Activated T-helper 1 cell treated with anti-CD3 and anti-CD28 coated beads, Interleukin-12 subunit alpha, Interleukin-12 subunit beta, Interleukin-2, Interleukin-4 antibody, amounts not matched to agents 30 ng/mL and 10 ng/mL and 1 ng/mL, durations not matched to agents 14 hours and 24 hours and 36 hours (primary cell): ENCODE measurements at regions of chr9 and their contacts with region 1.

Region 1: DNA sequence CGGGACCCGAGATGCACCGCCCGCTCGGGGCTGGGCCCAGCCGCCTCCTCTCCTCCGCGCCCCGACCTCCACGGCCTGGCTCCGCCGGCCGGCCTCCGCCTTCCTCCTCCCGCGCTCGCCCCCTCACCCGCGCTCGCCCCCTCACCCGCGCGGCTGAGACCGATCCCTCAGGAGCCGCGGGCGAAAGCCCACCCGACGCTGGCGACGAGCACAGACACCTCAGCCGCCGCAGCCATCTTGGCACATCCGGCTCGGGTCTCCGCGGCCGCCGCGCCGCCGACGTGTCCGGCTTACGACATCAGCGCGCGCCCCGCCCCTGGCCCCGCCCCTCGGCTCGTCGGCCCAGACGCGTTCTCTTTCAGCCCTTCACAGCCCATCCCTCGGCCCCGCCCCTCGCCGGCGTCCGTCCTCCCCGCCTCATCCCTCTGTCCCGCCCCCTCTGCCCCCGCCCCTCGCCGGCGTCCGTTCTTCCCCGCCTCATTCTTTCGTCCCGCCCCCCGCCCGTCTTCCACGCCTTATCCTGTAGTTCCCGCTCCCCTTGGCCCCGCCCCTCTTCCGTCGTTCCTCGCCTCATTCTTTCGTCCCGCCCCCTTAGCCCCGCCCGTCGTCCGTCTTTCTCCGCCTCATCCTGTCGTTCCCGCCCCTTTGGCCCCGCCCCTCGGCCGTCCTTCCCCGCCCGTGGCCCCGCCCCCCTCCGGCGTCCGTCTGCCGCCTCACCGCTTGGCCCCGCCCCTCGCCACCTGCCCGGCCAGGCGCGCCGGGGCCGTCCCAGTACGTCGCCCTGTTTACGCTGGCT is at the start of gene SEC16A:
- DNase-seq: peak; percentile 98
- H3K4me3 Mint-ChIP-seq: peak within 1 kb of the TSS; percentile 96
- H3K27ac Mint-ChIP-seq: peak within 1 kb of the TSS; percentile 95
- H3K4me1 Mint-ChIP-seq: peaks cover 23% of the 10 kb centered on the region
- H3K27me3 Mint-ChIP-seq: no peaks in the 10 kb centered on the region
- total RNA-seq, gene SEC16A: 87.3 and 88.5 TPM in 2 replicates

Region 2: DNA sequence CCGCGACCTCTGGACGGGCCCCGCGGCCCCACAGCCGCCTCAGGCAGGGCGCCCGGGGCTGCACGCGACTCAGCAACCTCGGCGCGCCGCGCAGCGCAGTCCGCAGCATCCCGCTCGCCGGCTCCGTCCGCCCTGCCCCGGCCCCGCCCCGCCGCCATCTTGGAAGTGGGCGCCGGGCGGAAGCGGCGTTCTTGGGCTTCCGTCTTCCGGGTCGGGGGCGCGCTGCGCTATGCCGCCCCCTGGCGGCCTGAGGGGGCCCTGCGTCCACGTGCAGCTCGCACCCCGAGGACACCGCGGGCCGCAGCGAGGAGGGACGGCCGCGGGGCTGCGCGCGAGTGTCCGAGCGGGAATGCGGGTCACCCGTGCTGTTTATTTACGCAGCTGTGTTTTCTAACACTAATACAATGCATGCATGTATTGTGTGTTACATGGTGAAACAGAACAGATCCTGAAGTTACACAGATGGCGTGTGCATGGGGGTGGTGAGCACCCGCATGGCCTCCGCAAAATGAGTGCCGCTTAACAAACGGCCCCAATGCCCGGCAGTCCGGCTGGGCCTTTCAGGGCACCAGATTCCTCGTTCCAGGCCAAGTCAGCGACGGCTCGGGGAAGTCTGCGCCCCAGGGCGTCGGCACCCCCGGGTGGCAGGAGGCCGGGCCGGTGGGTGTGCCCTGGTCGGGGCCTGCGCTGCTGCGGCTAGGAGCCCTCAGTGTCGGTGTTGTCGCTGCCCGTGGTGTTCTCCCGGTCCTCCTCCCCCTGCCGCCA is 119.2 kb before region 1 on chr9 and contains the start of gene DNLZ:
- intact Hi-C with region 1: loop called (anchors 1 kb)
- DNase-seq: peak; percentile 83
- H3K4me3 Mint-ChIP-seq: peak within 1 kb of the TSS; percentile 83
- H3K27ac Mint-ChIP-seq: peak within 1 kb of the TSS; percentile 79
- H3K4me1 Mint-ChIP-seq: peaks cover 6% of the 10 kb centered on the region
- H3K27me3 Mint-ChIP-seq: no peaks in the 10 kb centered on the region
- total RNA-seq, gene DNLZ: 35.2 TPM in 2 replicates

Region 3: GRCh38 chr9:136439550-136440408 is 43.2 kb before region 1 on chr9 and contains the start of gene INPP5E:
- intact Hi-C with region 1: loop called (anchors 2 kb)
- DNase-seq: peak; percentile 84
- H3K4me3 Mint-ChIP-seq: peak within 1 kb of the TSS; percentile 88
- H3K27ac Mint-ChIP-seq: peak within 1 kb of the TSS; percentile 23
- H3K4me1 Mint-ChIP-seq: peaks cover 18% of the 10 kb centered on the region
- H3K27me3 Mint-ChIP-seq: no peaks in the 10 kb centered on the region
- total RNA-seq, gene INPP5E: 19.7 and 20.0 TPM in 2 replicates

Region 4: GRCh38 chr9:136545966-136546698 is 63.1 kb after region 1 on chr9 and contains the start of gene NOTCH1:
- intact Hi-C with region 1: loop called (anchors 1 kb)
- DNase-seq: peak; percentile 83
- H3K4me3 Mint-ChIP-seq: peak within 1 kb of the TSS; percentile 94
- H3K27ac Mint-ChIP-seq: peak within 1 kb of the TSS; percentile 96
- H3K4me1 Mint-ChIP-seq: peaks cover 5% of the 10 kb centered on the region
- H3K27me3 Mint-ChIP-seq: no peaks in the 10 kb centered on the region
- total RNA-seq, gene NOTCH1: 115 and 121 TPM in 2 replicates

Region 5: GRCh38 chr9:136686794-136687711 is 204.1 kb after region 1 on chr9 and contains the start of gene AGPAT2:
- intact Hi-C with region 1: loop called (anchors 1 kb)
- DNase-seq: peak; percentile 40
- H3K4me3 Mint-ChIP-seq: peak within 1 kb of the TSS; percentile 80
- H3K27ac Mint-ChIP-seq: no peak within 1 kb of the TSS
- H3K4me1 Mint-ChIP-seq: no peaks in the 10 kb centered on the region
- H3K27me3 Mint-ChIP-seq: peaks cover 3% of the 10 kb centered on the region
- total RNA-seq, gene AGPAT2: 24.7 and 25.0 TPM in 2 replicates

Region 6: DNA sequence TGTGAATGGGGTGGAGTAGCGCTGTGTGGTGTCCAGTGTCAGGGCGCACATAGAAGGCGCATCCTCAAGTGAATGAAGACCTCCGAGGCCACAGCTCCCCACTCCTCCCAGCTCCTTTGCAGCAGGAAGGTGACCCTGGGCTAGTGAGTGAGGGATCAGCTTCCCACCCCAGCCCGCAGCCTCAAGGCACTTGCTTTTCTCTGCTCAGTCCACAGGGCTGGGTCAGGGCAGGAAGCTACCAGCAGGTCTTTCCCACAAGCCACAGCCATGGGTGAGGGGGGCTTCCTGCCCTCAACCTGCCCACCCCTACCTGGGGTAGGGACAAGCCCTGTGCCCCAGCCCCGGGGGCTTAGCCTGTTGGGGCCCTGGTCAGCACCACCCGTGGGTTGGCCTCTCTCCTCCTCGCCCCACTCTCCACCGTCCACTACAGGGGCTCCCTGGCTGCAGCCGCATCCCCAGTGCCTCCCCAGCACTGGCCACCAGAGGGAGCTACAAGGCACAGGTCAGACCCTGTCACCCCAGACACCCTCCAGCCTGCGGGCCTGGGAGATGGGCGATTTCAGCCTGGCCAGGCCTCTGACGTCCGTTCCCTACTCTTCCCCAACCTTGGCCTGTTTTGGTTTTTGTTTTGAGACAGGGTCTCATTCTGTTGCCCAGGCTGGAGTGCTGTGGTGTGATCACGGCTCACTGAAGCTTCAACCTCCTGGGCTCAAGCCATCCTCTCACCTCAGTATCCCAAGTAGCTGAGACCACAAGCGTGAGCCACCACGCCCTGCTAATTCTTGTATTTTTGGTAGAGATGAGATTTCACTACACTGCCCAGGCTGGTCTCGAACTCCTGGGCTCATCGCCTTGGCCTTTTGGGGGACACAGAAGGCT is 546.3 kb after region 1 on chr9:
- intact Hi-C with region 1: loop called (anchors 10 kb)
- DNase-seq: peak; percentile 63
- H3K4me3 Mint-ChIP-seq: peak overlapping the region; percentile 80
- H3K27ac Mint-ChIP-seq: peak overlapping the region; percentile 67
- H3K4me1 Mint-ChIP-seq: peaks cover 30% of the 10 kb centered on the region
- H3K27me3 Mint-ChIP-seq: no peaks in the 10 kb centered on the region

Region 7: DNA sequence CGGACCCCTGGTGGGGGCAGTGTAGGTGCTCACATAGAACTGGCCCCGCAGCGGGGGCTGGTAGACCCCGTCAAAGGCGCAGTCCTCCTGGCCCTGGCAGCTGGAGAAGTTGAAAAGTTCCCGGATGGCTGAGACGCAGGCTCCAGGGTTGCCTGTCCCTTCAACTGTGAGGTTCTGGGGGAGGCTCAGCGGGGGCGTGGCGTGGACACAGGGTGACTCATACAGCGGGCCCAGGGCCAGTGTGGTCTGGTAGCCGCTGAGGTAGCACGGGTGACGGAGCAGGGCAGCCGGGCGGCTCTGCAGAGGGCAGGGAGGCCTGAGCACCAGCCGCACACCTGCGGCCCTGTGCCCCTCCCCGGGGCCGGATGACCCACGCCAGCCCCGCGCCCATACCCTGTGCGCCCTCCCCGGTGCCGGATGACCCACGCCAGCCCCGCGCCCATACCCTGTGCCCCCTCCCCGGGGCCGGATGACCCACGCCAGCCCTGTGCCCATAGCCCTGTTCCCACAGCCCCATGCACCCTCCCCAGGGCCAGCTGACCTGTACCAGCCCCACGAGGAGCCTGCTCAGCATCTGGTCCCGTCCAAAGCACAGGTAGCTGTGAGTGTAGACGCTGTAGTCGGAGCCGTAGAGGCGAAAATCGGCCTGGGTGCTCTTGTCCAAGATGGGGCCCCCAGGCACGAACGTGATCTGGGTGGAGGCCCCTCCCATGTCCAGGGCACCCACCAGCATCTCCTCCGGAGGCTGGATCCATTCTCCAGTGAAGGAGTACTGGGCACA is 953.2 kb after region 1 on chr9:
- intact Hi-C with region 1: no loop called
- DNase-seq: no peak
- H3K4me3 Mint-ChIP-seq: no peak overlapping the region
- H3K27ac Mint-ChIP-seq: no peak overlapping the region
- H3K4me1 Mint-ChIP-seq: no peaks in the 10 kb centered on the region
- H3K27me3 Mint-ChIP-seq: no peaks in the 10 kb centered on the region